ENCODE measurements at regions of chr5 and their contacts with region 1.

Region 1: DNA sequence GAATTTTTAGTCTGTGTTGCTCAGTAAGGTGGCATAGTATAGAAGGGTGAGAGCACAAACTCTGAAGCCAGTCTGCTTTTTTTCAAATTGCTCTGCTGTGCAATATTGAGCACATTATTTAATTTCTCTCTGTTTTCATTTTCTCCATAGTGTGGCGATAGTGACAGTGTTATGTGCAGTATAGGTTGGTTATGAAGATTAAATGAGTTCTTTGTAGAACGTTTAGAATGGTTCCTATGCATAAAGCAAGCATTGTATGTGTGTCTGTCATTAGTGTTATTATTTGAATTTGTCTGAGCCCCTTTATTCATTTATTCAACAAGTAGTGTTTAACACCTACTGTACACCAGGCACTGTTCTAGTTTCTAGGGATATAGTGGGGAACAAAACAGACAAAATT is 9.2 kb downstream of the PRR16 start:
- DNase-seq: no peak

Region 2: DNA sequence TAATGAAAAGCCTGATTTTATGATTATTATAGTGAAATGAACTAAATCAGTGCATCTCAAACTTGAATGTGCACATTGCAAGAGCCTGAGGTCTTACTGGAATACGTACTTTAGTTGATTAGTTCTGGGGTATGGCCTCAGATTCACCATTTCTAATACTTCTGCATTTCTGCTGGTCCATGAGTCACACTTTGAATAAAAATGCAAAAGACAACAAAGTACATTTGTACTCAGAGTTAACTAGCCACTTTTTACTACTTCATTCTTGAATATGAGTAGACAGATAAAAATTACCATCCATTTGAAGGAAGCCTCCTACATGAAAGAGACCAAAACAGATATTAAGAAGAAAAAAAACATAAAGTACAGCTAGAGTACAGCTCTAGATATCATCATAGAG is 36.3 kb before region 1 on chr5:
- intact Hi-C with region 1: no loop called
- DNase-seq: no peak

Region 3: GRCh38 chr5:120550358-120550757 is 77.0 kb after region 1 on chr5:
- intact Hi-C with region 1: loop called in 1 of 2 experiments (anchors 2 kb)
- DNase-seq: no peak

Measured in posterior vena cava (tissue), 2 donors.